AG04450 (cell line): ENCODE measurements at regions of chr19 and their contacts with region 1.

Region 1: GRCh38 chr19:17859533-17860330 is at the start of gene RPL18A:
- DNase-seq: peak; percentile 99
- H3K4me3 ChIP-seq: peak within 1 kb of the TSS; percentile 94
- H3K27ac ChIP-seq: no peak within 1 kb of the TSS
- H3K27me3 ChIP-seq: no peaks in the 10 kb centered on the region
- CTCF ChIP-seq: peak; percentile 81
- polyA plus RNA-seq, gene RPL18A: 890 and 1,276 TPM in 2 replicates

Region 2: DNA sequence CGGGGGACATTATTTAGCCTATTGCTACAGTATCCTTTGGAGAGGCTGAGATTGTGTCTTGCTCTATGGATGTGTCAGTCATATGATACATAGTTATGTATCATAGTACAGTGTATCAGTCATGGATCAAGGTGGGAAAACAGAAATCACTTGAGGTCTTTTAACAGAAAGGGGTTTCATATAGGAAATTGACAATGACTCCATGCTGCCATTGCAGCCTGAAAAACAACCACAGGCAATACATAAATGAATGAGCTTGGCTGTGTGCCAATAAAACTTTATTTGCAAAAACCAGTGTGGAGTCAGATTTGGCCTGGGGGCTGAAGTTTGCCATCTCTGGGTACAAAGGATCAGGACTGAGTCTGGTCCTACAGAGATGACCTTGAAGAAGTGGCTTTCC is 268.9 kb before region 1 on chr19:
- CTCF ChIA-PET with region 1: interaction called, 13 read pairs
- POLR2A ChIA-PET with region 1: no interaction called
- DNase-seq: no peak
- H3K4me3 ChIP-seq: no peak overlapping the region
- H3K27ac ChIP-seq: no peak overlapping the region
- H3K27me3 ChIP-seq: no peaks in the 10 kb centered on the region
- CTCF ChIP-seq: no peak

Region 3: GRCh38 chr19:17648097-17648660 is 211.6 kb before region 1 on chr19:
- CTCF ChIA-PET with region 1: no interaction called
- POLR2A ChIA-PET with region 1: no interaction called
- DNase-seq: no peak
- H3K4me3 ChIP-seq: no peak overlapping the region
- H3K27ac ChIP-seq: no peak overlapping the region
- H3K27me3 ChIP-seq: no peaks in the 10 kb centered on the region
- CTCF ChIP-seq: no peak

Region 4: DNA sequence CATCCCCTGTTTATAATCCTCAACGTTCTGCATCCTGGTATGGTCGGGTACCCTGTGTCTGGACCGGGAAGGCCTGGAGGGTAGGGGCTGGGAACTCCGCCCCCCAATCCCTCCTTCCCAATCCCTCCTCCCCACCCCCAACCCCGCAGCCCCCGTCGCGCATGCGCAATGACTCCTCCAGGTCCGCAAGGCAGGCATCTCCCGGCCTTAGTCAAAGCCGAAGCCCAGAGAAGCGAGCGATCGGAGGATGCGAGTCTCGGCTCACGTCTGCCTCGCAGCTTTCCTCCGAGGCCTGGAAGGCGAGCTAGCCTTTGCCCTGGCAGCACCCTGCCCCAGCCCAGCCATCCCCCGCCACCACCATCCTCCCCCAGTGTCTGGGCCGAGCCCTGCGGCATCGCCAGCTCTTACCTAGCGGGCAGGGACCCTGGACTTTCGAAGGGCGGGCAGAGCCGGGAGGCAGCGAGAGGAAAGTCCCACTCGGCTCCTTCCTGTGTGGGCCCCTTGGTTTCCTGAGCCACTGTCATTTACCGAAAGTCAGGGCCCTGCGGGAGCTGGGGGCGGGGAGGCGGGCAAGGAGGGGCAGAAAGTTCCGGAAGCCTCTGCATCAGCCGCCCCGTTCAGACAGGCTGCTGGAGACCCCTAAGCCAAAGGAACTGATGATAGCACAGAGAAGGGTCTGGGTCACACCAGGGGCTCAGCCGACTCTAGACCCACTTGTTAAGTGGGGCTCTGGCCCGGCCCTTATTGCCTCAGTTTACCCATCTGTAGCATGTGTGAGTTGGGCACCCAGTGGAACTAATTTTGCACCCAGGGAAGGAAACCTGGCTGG is 12.0 kb before region 1 on chr19 and contains the start of gene JAK3:
- CTCF ChIA-PET with region 1: interaction called, 24 read pairs
- POLR2A ChIA-PET with region 1: interaction called, 15 read pairs
- DNase-seq: no peak
- H3K4me3 ChIP-seq: peak within 1 kb of the TSS; percentile 45
- H3K27ac ChIP-seq: peak within 1 kb of the TSS; percentile 21
- H3K27me3 ChIP-seq: peaks cover 2% of the 10 kb centered on the region
- CTCF ChIP-seq: no peak
- polyA plus RNA-seq, gene JAK3: 0.99 and 1.4 TPM in 2 replicates

Region 5: GRCh38 chr19:17871878-17872250 is 12.1 kb after region 1 on chr19 and contains the start of gene SLC5A5:
- CTCF ChIA-PET with region 1: interaction called, 12 read pairs
- POLR2A ChIA-PET with region 1: interaction called, 3 read pairs
- DNase-seq: no peak
- H3K4me3 ChIP-seq: no peak within 1 kb of the TSS
- H3K27ac ChIP-seq: no peak within 1 kb of the TSS
- H3K27me3 ChIP-seq: peaks cover 57% of the 10 kb centered on the region
- CTCF ChIP-seq: no peak
- polyA plus RNA-seq, gene SLC5A5: not detected in 2 replicates

Region 6: GRCh38 chr19:17932485-17933338 is 73.0 kb after region 1 on chr19 and contains the start of gene CCDC124:
- CTCF ChIA-PET with region 1: interaction called, 28 read pairs
- POLR2A ChIA-PET with region 1: interaction called, 24 read pairs
- DNase-seq: peak; percentile 68
- H3K4me3 ChIP-seq: peak within 1 kb of the TSS; percentile 98
- H3K27ac ChIP-seq: peak within 1 kb of the TSS; percentile 84
- H3K27me3 ChIP-seq: peaks cover 3% of the 10 kb centered on the region
- CTCF ChIP-seq: peak; percentile 94
- polyA plus RNA-seq, gene CCDC124: 36.0 and 40.9 TPM in 2 replicates

Region 7: GRCh38 chr19:17947815-17948513 is 88.2 kb after region 1 on chr19:
- CTCF ChIA-PET with region 1: interaction called, 12 read pairs
- POLR2A ChIA-PET with region 1: no interaction called
- DNase-seq: peak; percentile 70
- H3K4me3 ChIP-seq: peak overlapping the region; percentile 61
- H3K27ac ChIP-seq: no peak overlapping the region
- H3K27me3 ChIP-seq: peaks cover 39% of the 10 kb centered on the region
- CTCF ChIP-seq: no peak